Prostate gland (tissue), 2 donors: ENCODE measurements at regions of chr2 and their contacts with region 1.

Region 1: GRCh38 chr2:222969491-222969890 is 82.5 kb upstream of the KCNE4 start:
- DNase-seq: no peak
- H3K4me3 ChIP-seq: no peak overlapping the region
- H3K27ac ChIP-seq: no peak overlapping the region
- H3K4me1 ChIP-seq: no peaks in the 10 kb centered on the region
- H3K27me3 ChIP-seq: no peaks in the 10 kb centered on the region
- CTCF ChIP-seq: no peak
- POLR2A ChIP-seq: no peak

Region 2: GRCh38 chr2:223032187-223033142 is 63.0 kb after region 1 on chr2:
- intact Hi-C with region 1: no loop called
- DNase-seq: no peak
- H3K4me3 ChIP-seq: no peak overlapping the region
- H3K27ac ChIP-seq: no peak overlapping the region
- H3K4me1 ChIP-seq: no peaks in the 10 kb centered on the region
- H3K27me3 ChIP-seq: no peaks in the 10 kb centered on the region
- CTCF ChIP-seq: no peak
- POLR2A ChIP-seq: no peak

Region 3: GRCh38 chr2:223101340-223102039 is 132.0 kb after region 1 on chr2:
- intact Hi-C with region 1: loop called (anchors 5 kb)
- DNase-seq: no peak
- H3K4me3 ChIP-seq: no peak overlapping the region
- H3K27ac ChIP-seq: no peak overlapping the region
- H3K4me1 ChIP-seq: no peaks in the 10 kb centered on the region
- H3K27me3 ChIP-seq: no peaks in the 10 kb centered on the region
- CTCF ChIP-seq: peak in 2 of 4 experiments; percentile 16 to 28
- POLR2A ChIP-seq: no peak

Region 4: DNA sequence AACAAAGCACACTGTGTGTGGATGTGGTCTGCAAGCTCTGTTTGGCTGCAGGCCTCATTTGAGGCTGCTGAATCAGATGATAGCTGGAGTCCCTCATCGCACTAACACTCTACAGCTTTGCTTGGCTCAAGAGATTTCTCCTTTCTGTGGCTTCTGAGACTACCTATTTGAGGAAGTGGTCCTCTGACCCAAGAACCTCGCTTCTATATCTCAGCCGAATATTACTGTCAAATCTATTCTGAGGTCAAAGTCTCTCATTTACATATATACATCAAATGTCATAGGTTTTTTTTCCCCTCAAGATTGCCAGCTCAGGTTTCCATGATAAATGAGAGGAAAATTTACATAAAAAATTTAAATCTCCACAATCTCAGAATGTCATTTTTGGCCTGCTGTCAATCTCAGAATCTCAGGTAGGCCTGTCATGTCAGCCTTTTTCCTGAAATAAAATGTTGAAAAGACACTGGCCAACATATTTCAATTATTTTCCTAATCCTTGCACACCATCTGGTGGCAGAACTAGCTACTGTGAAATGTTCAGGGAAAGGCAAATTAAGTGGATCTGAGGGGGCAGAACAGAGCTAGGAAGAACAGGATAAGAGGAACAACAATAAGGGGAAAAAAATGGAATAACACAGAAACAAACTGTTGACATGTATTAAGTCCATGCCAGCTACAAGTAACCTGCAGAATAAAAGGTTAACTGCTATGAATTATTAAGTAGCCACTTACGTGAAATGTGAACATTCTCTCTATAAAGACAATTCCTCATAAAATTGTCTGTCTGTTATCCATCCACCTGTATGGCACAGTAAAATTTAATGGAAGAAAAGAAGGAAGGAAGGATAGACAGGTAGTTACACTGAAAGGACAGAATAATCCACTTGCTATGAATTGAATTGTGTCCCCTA is 828.6 kb after region 1 on chr2:
- intact Hi-C with region 1: loop called (anchors 2 kb)
- DNase-seq: no peak
- H3K4me3 ChIP-seq: no peak overlapping the region
- H3K27ac ChIP-seq: no peak overlapping the region
- H3K4me1 ChIP-seq: no peaks in the 10 kb centered on the region
- H3K27me3 ChIP-seq: no peaks in the 10 kb centered on the region
- CTCF ChIP-seq: peak in 3 of 4 experiments; percentile 34 to 70 (median 70)
- POLR2A ChIP-seq: no peak